ENCODE measurements at regions of chr19 and their contacts with region 1.

Region 1: DNA sequence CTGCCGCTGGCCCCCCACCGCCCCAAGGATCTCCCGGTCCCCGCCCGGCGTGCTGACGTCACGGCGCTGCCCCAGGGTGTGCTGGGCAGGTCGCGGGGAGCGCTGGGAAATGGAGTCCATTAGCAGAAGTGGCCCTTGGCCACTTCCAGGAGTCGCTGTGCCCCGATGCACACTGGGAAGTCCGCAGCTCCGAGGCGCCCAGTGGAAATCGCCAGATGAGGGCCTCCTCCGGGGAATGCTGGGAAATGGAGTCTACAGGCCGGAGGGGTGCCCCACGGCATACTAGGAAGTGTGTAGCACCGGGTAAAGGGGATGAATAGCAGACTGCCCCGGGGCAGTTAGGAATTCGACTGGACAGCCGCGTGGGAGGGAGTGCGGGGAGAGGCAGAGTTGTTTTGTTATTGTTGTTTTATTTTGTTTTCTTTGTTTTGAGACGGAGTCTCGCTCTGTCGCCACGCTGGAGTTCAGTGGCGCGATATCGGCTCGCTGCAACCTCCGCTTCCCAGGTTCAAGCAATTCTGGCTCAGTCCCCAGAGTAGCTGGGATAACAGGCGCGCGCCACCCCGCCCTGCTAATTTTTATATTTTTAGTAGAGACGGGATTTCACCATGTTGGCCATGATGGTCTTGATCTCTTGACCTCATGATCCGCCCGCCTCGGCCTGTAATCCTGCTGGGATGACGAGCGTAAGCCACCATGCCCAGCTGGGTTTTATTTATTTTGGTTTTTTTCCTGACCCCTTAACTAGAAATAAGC is at the start of gene PPP1R12C:
- DNase-seq: peak; percentile 99
- H3K4me3 ChIP-seq: peak within 1 kb of the TSS; percentile 88 to 96 (median 92)
- H3K27ac ChIP-seq: peak within 1 kb of the TSS; percentile 58
- H3K4me1 ChIP-seq: peaks cover 18% of the 10 kb centered on the region
- H3K27me3 ChIP-seq: no peaks in the 10 kb centered on the region
- CTCF ChIP-seq: peak in 1 of 2 donors; percentile 7
- total RNA-seq, gene PPP1R12C: 29.8 to 74.8 TPM

Region 2: DNA sequence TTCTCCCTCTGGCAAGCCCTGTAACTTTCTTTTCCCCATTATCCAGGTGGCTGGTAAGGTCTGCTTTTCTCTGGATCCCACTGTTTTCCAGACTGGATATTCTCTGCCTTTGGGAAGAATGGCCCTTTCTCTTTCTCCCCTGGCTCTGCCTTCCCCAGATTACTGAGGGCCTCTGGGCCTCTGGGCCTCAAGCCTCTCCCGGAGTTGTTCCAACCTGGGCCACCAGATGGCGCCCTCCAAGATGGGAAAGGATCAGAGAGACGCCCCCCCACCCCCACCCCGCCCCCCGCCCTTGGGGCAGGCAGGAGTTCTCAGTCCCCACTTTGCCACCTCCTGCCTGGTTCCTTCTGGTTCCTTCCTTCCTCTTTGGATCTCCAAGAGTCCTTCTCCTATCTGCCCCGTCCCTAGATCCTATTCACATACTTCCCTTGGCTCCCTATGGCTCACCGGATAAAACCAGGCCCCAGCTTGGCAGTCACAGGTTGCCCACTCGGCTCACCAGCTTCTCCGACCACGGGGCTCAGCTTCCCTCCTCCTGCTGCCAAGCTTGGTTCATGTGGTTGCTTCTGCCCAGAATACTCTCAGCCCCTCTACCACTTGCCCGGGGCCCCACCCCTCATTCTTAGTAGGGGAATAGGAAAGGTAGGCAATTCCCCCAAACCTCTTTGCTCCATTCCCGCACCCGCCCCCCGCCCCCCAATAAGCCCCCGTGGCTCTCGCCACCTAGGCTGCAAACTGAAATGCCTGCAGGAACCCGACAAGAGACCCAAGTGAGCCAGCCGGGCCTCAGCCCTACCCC is 29.1 kb before region 1 on chr19:
- CTCF ChIA-PET with region 1: interaction called, 3 read pairs
- dilution Hi-C with region 1: no loop called
- in situ Hi-C with region 1: no loop called
- intact Hi-C with region 1: loop called (anchors 2 kb)
- DNase-seq: peak; percentile 28
- H3K4me3 ChIP-seq: no peak overlapping the region
- H3K27ac ChIP-seq: no peak overlapping the region
- H3K4me1 ChIP-seq: no peaks in the 10 kb centered on the region
- H3K27me3 ChIP-seq: no peaks in the 10 kb centered on the region
- CTCF ChIP-seq: peak; percentile 45 to 65

Region 3: GRCh38 chr19:55216461-55217198 is 98.8 kb after region 1 on chr19:
- CTCF ChIA-PET with region 1: no interaction called
- dilution Hi-C with region 1: no loop called
- in situ Hi-C with region 1: no loop called
- intact Hi-C with region 1: loop called (anchors 1 kb)
- DNase-seq: peak; percentile 99
- H3K4me3 ChIP-seq: peak overlapping the region; percentile 37 to 64 (median 49)
- H3K27ac ChIP-seq: peak overlapping the region; percentile 70
- H3K4me1 ChIP-seq: peaks cover 9% of the 10 kb centered on the region
- H3K27me3 ChIP-seq: no peaks in the 10 kb centered on the region
- CTCF ChIP-seq: no peak

Region 4: DNA sequence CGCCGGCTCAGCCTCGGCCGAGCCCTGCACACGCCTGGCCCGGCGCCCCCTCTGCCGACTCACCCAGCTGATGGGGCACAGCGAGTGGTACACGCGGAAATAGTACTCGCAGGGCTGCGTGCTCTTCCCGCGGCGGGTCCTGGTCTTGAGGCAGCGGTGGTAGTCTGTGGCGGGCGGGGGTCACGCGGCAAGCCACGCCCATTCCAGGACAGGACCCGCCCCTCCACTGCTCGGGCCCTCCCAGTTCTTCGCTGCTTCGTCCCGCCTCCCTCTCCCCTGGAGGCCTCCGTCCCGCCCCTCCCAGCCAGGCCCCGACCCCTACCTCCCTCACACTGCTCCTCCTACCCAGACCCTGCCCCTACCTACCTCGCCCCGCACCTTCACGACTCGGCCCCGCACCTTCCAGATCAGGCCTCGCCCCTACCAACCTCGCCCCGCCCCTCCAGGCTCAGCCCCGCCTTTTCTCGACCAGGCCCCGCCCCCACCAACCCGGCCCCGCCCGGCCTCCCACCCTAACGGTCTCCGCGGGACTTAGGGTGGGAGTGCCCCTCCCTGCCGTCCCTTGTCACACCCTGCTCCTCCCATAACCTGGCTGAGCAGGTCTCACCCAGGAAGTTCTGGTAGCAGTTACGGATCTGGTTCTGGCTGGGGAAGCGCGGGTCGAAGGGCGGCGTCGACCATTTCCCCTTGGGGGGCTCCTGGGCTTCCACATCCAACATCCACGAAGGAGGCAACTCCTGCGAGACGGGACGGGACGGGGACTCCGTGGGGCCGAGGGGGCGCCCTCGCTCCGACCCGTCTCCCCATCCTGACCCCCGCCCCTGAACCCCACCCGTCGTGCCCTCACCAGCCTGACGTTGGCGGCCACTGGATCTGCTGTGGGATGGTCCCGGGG is 236.2 kb after region 1 on chr19:
- CTCF ChIA-PET with region 1: no interaction called
- dilution Hi-C with region 1: loop called (anchors 10 kb)
- in situ Hi-C with region 1: no loop called
- intact Hi-C with region 1: no loop called
- DNase-seq: peak; percentile 60
- H3K4me3 ChIP-seq: peak overlapping the region; percentile 47 to 59 (median 48)
- H3K27ac ChIP-seq: no peak overlapping the region
- H3K4me1 ChIP-seq: peaks cover 30% of the 10 kb centered on the region
- H3K27me3 ChIP-seq: no peaks in the 10 kb centered on the region
- CTCF ChIP-seq: no peak

Region 5: GRCh38 chr19:55369671-55370304 is 252.0 kb after region 1 on chr19:
- CTCF ChIA-PET with region 1: no interaction called
- dilution Hi-C with region 1: no loop called
- in situ Hi-C with region 1: no loop called
- intact Hi-C with region 1: no loop called
- DNase-seq: peak; percentile 50
- H3K4me3 ChIP-seq: peak overlapping the region; percentile 28 to 66 (median 62)
- H3K27ac ChIP-seq: peak overlapping the region; percentile 0
- H3K4me1 ChIP-seq: peaks cover 29% of the 10 kb centered on the region
- H3K27me3 ChIP-seq: no peaks in the 10 kb centered on the region
- CTCF ChIP-seq: no peak

Region 6: DNA sequence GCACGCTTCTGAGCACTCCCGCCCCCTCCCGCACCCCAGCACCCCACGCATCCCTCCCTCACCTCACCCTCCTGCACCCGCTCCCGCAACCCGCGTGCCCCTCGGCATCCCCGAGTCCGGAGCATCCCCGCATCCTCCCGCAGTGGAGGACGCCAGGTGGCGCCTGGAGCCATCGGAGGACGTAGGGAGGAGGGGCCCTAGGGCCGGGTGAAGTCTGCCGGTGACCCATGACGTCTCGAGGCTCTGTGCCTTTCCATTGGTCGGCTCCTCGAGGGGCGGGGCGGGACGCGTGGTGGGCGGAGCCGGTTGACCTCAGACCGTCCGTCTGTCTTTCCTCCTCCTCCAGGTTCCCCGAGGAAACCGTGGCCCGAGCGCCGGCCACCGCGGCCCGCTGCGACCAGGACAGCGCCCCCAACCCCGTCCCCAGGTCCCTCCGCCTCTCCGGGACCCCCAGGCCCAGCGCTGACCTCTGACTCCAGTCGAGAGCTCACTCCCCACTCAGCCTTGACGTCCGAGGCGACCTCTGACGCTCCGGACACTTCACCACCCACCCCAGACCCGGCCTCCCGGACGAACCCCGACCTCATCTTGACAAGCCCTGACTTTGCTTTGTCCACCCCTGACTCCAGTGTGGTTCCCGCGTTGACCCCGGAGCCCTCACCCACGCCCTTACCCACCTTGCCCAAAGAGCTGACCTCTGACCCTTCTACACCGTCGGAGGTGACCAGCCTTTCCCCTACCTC is 399.2 kb after region 1 on chr19:
- CTCF ChIA-PET with region 1: no interaction called
- dilution Hi-C with region 1: loop called (anchors 5 kb)
- in situ Hi-C with region 1: no loop called
- intact Hi-C with region 1: no loop called
- DNase-seq: peak; percentile 82
- H3K4me3 ChIP-seq: peak overlapping the region; percentile 25 to 58 (median 27)
- H3K27ac ChIP-seq: no peak overlapping the region
- H3K4me1 ChIP-seq: no peaks in the 10 kb centered on the region
- H3K27me3 ChIP-seq: no peaks in the 10 kb centered on the region
- CTCF ChIP-seq: peak; percentile 63 to 97